Activated CD4-positive, alpha-beta T cell treated with anti-CD3 and anti-CD28 coated beads for 36 hours (primary cell): ENCODE measurements at regions of chr14 and their contacts with region 1.

Region 1: DNA sequence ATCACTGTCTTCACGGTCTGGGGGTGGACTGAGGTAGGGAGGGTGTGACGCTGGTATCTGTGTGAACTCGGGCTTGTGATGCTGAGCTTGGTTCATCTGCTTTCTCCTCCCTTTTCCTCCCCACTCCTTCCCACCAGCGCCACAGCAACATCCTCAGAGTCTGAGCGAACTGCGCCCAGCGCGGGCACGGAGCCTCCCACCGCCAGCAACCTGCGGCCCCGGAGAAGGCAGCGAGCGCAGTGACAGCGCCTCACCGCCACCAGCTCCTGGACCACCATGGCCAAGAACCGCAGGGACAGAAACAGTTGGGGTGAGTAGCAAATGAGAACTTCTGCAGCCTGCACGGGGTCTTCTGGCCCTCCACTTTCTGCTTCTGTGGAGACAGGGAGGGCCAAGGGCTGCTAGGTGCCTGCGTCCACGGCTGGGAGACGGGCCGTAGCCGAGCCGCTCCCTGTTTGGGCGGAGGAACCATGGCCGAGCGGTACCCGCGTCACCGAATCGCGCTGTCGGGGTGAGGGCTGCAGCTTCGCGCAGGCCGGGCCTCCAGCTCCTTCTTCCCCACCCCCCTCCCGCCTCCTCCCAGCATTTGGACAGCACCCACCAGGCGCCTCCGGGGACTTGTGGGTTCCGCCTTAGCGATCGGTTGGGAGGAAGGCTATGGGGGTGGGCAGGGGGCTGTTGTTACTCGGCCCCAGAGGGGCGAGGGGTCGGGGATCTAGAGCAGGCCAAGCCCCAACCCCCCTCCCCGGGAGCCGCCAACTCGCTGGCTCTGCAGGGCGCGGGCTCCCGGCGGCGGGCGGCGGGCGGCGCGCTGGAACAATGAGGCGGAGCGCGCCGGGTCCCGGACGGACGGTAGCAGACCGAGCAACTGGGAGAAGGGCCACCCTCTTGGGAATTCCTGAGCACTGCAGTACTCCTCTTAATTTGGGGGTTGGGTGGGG is at the start of gene ATL1:
- DNase-seq: peak; percentile 70
- ATAC-seq: peak; percentile 80
- H3K4me3 Mint-ChIP-seq: peak within 1 kb of the TSS; percentile 74
- H3K27ac Mint-ChIP-seq: no peak within 1 kb of the TSS
- H3K4me1 Mint-ChIP-seq: peaks cover 12% of the 10 kb centered on the region
- H3K27me3 Mint-ChIP-seq: peaks cover 46% of the 10 kb centered on the region
- total RNA-seq, gene ATL1: 0.82 to 0.91 TPM

Region 2: GRCh38 chr14:50542941-50543418 is 17.3 kb before region 1 on chr14:
- CTCF ChIA-PET with region 1: interaction called, 6 read pairs
- POLR2A ChIA-PET with region 1: no interaction called
- intact Hi-C with region 1: loop called in 1 of 2 experiments (anchors 1 kb)
- DNase-seq: peak; percentile 58
- ATAC-seq: peak; percentile 98
- H3K4me3 Mint-ChIP-seq: no peak overlapping the region
- H3K27ac Mint-ChIP-seq: peak overlapping the region; percentile 72
- H3K4me1 Mint-ChIP-seq: peaks cover 16% of the 10 kb centered on the region
- H3K27me3 Mint-ChIP-seq: no peaks in the 10 kb centered on the region

Region 3: DNA sequence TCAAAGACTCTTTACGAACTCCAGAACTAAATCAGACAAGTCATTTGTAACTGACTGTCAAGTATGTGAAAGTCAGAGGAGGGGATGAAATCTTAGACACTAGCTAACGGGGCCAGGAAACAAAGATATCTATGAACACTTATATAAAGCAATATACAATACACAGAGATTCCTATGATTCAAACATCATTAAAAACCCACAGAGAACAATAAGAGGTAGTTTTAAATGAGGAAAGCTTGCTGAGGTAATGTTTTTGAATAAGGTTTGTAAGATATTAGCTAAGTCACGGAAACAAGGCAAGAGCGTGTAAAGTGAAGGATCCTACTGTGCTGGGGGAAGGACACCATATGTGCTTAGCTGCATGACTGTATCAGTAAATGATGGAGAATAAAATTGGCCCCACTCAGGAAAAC is 71.2 kb after region 1 on chr14:
- CTCF ChIA-PET with region 1: no interaction called
- POLR2A ChIA-PET with region 1: no interaction called
- intact Hi-C with region 1: no loop called
- DNase-seq: no peak
- ATAC-seq: no peak
- H3K4me3 Mint-ChIP-seq: no peak overlapping the region
- H3K27ac Mint-ChIP-seq: no peak overlapping the region
- H3K4me1 Mint-ChIP-seq: no peaks in the 10 kb centered on the region
- H3K27me3 Mint-ChIP-seq: no peaks in the 10 kb centered on the region

Region 4: GRCh38 chr14:50667996-50668825 is 108.0 kb after region 1 on chr14 and contains the start of gene SAV1:
- CTCF ChIA-PET with region 1: no interaction called
- POLR2A ChIA-PET with region 1: interaction called, 4 read pairs
- intact Hi-C with region 1: loop called in 1 of 2 experiments (anchors 5 kb)
- DNase-seq: peak; percentile 71
- ATAC-seq: peak; percentile 79
- H3K4me3 Mint-ChIP-seq: no peak within 1 kb of the TSS
- H3K27ac Mint-ChIP-seq: peak within 1 kb of the TSS; percentile 80
- H3K4me1 Mint-ChIP-seq: peaks cover 12% of the 10 kb centered on the region
- H3K27me3 Mint-ChIP-seq: no peaks in the 10 kb centered on the region
- total RNA-seq, gene SAV1: 13.6 TPM

Region 5: GRCh38 chr14:50741571-50741970 is 181.3 kb after region 1 on chr14:
- CTCF ChIA-PET with region 1: no interaction called
- POLR2A ChIA-PET with region 1: no interaction called
- intact Hi-C with region 1: no loop called
- DNase-seq: peak; percentile 21
- ATAC-seq: peak; percentile 6
- H3K4me3 Mint-ChIP-seq: no peak overlapping the region
- H3K27ac Mint-ChIP-seq: no peak overlapping the region
- H3K4me1 Mint-ChIP-seq: peaks cover 42% of the 10 kb centered on the region
- H3K27me3 Mint-ChIP-seq: no peaks in the 10 kb centered on the region